ENCODE measurements at regions of chr11 and their contacts with region 1.

Region 1: DNA sequence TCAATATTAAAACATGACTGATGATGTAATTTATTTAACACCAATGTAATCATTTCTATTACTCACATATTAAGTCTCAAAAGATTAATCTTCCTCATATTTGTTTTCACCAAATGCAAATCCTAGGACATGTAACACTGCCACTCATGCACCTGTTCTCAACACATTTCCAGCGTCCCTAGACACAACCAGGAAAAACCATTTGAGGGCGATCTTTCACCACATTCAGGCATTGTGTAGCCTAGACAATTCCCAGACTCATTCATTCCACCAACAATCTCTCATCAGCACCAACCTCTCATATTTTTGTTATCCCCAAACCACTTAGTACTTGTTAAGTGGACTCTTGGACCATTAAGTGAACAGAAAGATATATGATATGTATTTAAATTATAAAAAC is 66.1 kb downstream of the SLC36A4 start:
- DNase-seq: no peak
- H3K4me3 ChIP-seq: no peak overlapping the region
- H3K27ac ChIP-seq: no peak overlapping the region
- H3K4me1 ChIP-seq: no peaks in the 10 kb centered on the region
- H3K27me3 ChIP-seq: no peaks in the 10 kb centered on the region
- CTCF ChIP-seq: peak in 2 of 3 experiments; percentile 70; a peak in 3 of 4 replicates
- EP300 ChIP-seq: no peak
- POLR2A ChIP-seq: no peak
- RAD21 ChIP-seq: peak; percentile 88 to 90

Region 2: DNA sequence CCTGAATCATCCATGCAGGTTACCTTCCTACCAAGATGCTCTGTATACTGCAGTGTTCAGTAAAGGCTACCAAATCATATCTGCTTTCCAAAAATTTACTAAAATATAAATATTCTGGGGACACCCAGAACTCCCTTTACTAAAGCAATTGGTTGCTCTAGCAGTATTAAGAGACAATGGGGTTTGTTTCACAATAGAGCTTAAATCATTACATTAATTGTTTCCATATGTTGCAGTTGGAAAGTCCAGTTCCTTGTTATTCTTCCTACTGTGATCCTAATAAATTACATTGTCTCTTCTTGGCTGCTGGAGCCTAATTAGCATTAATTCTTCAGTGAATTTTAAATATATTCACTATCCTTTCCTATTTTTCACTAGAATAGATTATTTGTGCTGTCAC is 478.3 kb before region 1 on chr11:
- CTCF ChIA-PET with region 1: no interaction called
- POLR2A ChIA-PET with region 1: no interaction called
- DNase-seq: no peak
- H3K4me3 ChIP-seq: no peak overlapping the region
- H3K27ac ChIP-seq: no peak overlapping the region
- H3K4me1 ChIP-seq: no peaks in the 10 kb centered on the region
- H3K27me3 ChIP-seq: no peaks in the 10 kb centered on the region
- CTCF ChIP-seq: no peak
- EP300 ChIP-seq: no peak
- POLR2A ChIP-seq: no peak
- RAD21 ChIP-seq: no peak

Region 3: GRCh38 chr11:92920331-92920730 is 211.4 kb before region 1 on chr11:
- CTCF ChIA-PET with region 1: no interaction called
- POLR2A ChIA-PET with region 1: no interaction called
- DNase-seq: no peak
- H3K4me3 ChIP-seq: no peak overlapping the region
- H3K27ac ChIP-seq: no peak overlapping the region
- H3K4me1 ChIP-seq: peaks cover 0 to 8% (median under 1%) of the 10 kb centered on the region in 4 experiments; a peak in 3 of 7 replicates
- H3K27me3 ChIP-seq: no peaks in the 10 kb centered on the region
- CTCF ChIP-seq: no peak
- EP300 ChIP-seq: no peak
- POLR2A ChIP-seq: no peak
- RAD21 ChIP-seq: no peak

Region 4: GRCh38 chr11:93143800-93144199 is 12.1 kb after region 1 on chr11:
- CTCF ChIA-PET with region 1: interaction called, 5 read pairs
- POLR2A ChIA-PET with region 1: interaction called, 11 read pairs
- DNase-seq: no peak
- H3K4me3 ChIP-seq: no peak overlapping the region
- H3K27ac ChIP-seq: no peak overlapping the region
- H3K4me1 ChIP-seq: no peaks in the 10 kb centered on the region
- H3K27me3 ChIP-seq: no peaks in the 10 kb centered on the region
- CTCF ChIP-seq: no peak
- EP300 ChIP-seq: no peak
- POLR2A ChIP-seq: no peak
- RAD21 ChIP-seq: no peak